Esophagus squamous epithelium (tissue), 5 donors: ENCODE measurements at regions of chr16 and their contacts with region 1.

Region 1: GRCh38 chr16:66608241-66609138 is 4.0 kb downstream of the CMTM3 start:
- DNase-seq: no peak
- H3K4me3 ChIP-seq: no peak overlapping the region
- H3K27ac ChIP-seq: peak overlapping the region in 3 of 4 donors; percentile 5 to 41 (median 14)
- H3K4me1 ChIP-seq: peaks cover 19 to 51% (median 29%) of the 10 kb centered on the region in 3 donors
- H3K27me3 ChIP-seq: peaks cover 0 to 10% (median 0%) of the 10 kb centered on the region in 4 donors
- CTCF ChIP-seq: peak; percentile 74 to 94 (median 86)
- POLR2A ChIP-seq: no peak

Region 2: DNA sequence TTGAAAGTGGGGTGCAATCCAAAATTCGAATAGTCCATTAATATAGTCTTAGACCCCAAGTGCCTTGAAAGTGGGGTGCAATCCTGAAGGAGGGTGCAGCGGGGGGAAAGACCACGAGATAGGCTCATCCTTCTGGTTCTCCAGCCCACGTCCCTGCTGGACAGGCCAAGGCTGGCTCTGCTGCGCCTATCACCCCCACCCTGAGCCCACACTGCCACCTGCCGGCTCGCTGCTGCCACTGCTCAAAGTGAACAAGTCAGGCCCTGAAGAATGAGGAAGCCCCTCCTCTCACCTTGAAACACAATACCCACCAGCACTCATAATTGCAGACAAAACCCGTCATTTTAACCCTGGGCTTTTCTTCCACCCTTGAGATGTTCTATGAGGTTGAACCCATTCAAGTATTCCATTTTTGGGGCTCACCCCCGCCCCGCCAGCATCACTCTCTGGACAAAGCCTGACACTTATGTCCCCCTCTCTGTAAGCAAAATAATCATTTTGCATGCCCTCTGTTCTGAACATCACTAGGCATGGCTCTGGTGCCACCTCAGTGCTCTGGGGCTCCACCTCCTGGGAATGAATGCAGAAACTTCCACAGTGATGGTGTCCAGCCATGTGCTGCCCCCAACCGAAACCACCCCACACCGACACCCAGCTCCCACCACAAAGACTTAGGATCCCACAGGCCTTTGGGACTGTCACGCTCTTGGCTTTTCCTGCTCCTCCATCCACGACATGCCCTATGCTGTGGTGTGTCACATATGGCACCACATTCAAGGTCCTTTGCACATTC is 124.6 kb before region 1 on chr16:
- intact Hi-C with region 1: loop called (anchors 10 kb)
- DNase-seq: no peak
- H3K4me3 ChIP-seq: no peak overlapping the region
- H3K27ac ChIP-seq: no peak overlapping the region
- H3K4me1 ChIP-seq: peaks cover 22 to 51% (median 27%) of the 10 kb centered on the region in 3 donors
- H3K27me3 ChIP-seq: no peaks in the 10 kb centered on the region
- CTCF ChIP-seq: peak; percentile 85 to 95 (median 92)
- POLR2A ChIP-seq: no peak

Region 3: GRCh38 chr16:66859397-66860068 is 251.0 kb after region 1 on chr16:
- intact Hi-C with region 1: loop called (anchors 10 kb)
- DNase-seq: no peak
- H3K4me3 ChIP-seq: no peak overlapping the region
- H3K27ac ChIP-seq: no peak overlapping the region
- H3K4me1 ChIP-seq: peaks cover 0 to 6% (median 4%) of the 10 kb centered on the region in 3 donors
- H3K27me3 ChIP-seq: no peaks in the 10 kb centered on the region
- CTCF ChIP-seq: no peak
- POLR2A ChIP-seq: no peak

Region 4: GRCh38 chr16:67979955-67980678 is 1371.6 kb after region 1 on chr16 and contains the start of gene DPEP3:
- intact Hi-C with region 1: no loop called
- DNase-seq: no peak
- H3K4me3 ChIP-seq: no peak within 1 kb of the TSS
- H3K27ac ChIP-seq: no peak within 1 kb of the TSS
- H3K4me1 ChIP-seq: peaks cover 0 to 20% (median 11%) of the 10 kb centered on the region in 3 donors
- H3K27me3 ChIP-seq: peaks cover 0 to 23% (median 0%) of the 10 kb centered on the region in 4 donors
- CTCF ChIP-seq: no peak
- POLR2A ChIP-seq: no peak
- total RNA-seq, gene DPEP3: not detected